Gastrocnemius medialis (tissue), 4 donors: ENCODE measurements at regions of chr14 and their contacts with region 1.

Region 1: GRCh38 chr14:23301288-23301968 is 1.2 kb downstream of the PPP1R3E start:
- DNase-seq: peak; percentile 97 to 98
- ATAC-seq: peak; percentile 73 to 78
- H3K4me3 ChIP-seq: peak overlapping the region; percentile 72 to 87 (median 82)
- H3K27ac ChIP-seq: peak overlapping the region; percentile 96 to 99 (median 98)
- H3K4me1 ChIP-seq: peaks cover 30 to 32% of the 10 kb centered on the region in 2 donors
- H3K27me3 ChIP-seq: no peaks in the 10 kb centered on the region
- CTCF ChIP-seq: peak; percentile 60 to 94 (median 79)
- POLR2A ChIP-seq: peak; percentile 84 to 88

Region 2: GRCh38 chr14:22589096-22589839 is 712.2 kb before region 1 on chr14 and contains the start of gene DAD1:
- in situ Hi-C with region 1: loop called in 3 of 4 experiments (anchors 25 kb)
- intact Hi-C with region 1: loop called (anchors 10 kb)
- DNase-seq: peak; percentile 97 to 98
- ATAC-seq: peak; percentile 100
- H3K4me3 ChIP-seq: peak within 1 kb of the TSS; percentile 70 to 95 (median 83)
- H3K27ac ChIP-seq: peak within 1 kb of the TSS; percentile 82 to 92 (median 87)
- H3K4me1 ChIP-seq: peaks cover 27 to 35% of the 10 kb centered on the region in 2 donors
- H3K27me3 ChIP-seq: no peaks in the 10 kb centered on the region
- CTCF ChIP-seq: peak in 1 of 5 experiments; percentile 27
- POLR2A ChIP-seq: peak; percentile 78 to 84
- total RNA-seq, gene DAD1: 155 to 257 (median 209) TPM

Region 3: DNA sequence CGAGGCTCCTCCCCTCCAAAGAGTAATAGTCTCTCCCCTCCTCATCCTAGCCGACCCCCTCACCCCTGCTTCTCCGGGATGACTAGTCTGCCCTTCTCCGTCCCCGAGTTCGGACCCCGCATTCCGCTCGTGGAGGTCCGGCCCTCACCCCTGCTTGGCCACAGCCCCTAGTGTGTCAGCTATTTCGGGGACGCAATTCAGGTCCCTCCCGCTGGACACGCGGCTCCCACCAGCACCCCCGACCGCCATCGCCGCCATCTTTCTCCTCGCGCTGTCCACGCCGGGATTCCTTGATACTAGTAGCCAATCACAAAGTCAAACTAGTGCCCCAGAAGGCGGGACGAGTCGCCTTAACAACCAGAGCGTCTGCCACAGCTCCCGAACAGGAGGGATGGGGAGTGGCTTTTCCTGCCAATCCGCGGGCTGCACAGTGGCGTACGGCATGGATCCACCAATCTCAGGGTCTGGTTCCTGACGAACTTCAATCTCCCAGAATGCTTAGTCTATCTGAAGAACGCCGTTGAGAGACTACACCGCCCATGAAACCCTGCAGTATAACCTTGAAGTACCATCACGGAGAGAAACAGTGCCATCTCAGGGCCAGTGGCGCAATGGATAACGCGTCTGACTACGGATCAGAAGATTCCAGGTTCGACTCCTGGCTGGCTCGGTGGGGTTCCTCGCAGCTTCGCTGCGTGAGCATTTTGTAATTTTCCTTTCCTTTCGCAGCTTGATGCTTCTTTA is 372.2 kb before region 1 on chr14 and contains the start of gene PRMT5:
- in situ Hi-C with region 1: no loop called
- intact Hi-C with region 1: loop called (anchors 5 kb)
- DNase-seq: peak; percentile 100
- ATAC-seq: peak; percentile 98 to 99
- H3K4me3 ChIP-seq: peak within 1 kb of the TSS; percentile 78 to 95 (median 86)
- H3K27ac ChIP-seq: peak within 1 kb of the TSS; percentile 89 to 96 (median 94)
- H3K4me1 ChIP-seq: peaks cover 9 to 11% of the 10 kb centered on the region in 2 donors
- H3K27me3 ChIP-seq: no peaks in the 10 kb centered on the region
- CTCF ChIP-seq: no peak
- POLR2A ChIP-seq: peak; percentile 84 to 92
- total RNA-seq, gene PRMT5: 67.2 to 83.2 (median 78.6) TPM

Region 4: DNA sequence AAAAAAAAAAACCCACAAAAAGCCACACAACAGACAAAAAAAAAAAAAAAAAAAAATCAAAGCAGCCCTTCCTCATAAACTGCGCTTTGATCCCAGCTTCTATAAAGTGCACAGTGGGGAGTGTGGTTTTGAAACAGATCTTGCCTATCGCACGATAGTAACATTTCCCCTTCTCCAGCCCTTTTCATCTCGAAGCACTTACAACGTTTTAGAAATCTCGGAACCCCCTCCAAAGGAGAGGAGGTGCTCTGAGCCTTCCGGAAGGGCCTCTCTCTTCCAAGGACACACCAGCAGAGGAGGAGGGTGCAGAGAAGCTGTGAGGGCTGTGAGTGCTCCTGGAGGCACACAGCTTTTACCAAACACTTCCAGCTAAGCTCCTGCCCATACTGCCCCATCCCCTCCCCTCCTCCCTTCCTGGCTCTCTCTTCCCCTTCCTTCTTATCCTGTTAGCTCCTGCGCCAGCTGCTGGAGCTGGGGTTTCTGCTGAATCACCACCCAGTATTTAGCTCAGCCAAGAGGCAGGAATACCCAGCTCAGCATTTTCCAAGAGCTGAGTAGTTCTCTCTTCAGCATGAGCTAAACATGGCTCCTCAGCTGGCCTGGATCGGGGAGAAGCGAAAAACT is 146.4 kb before region 1 on chr14:
- in situ Hi-C with region 1: no loop called
- intact Hi-C with region 1: loop called (anchors 2 kb)
- DNase-seq: peak; percentile 93 to 98
- ATAC-seq: peak; percentile 72 to 75
- H3K4me3 ChIP-seq: peak overlapping the region; percentile 30 to 55 (median 46)
- H3K27ac ChIP-seq: peak overlapping the region; percentile 90 to 97 (median 96)
- H3K4me1 ChIP-seq: peaks cover 45 to 60% of the 10 kb centered on the region in 2 donors
- H3K27me3 ChIP-seq: no peaks in the 10 kb centered on the region
- CTCF ChIP-seq: no peak
- POLR2A ChIP-seq: peak; percentile 70 to 79

Region 5: GRCh38 chr14:23286020-23286905 is 15.2 kb before region 1 on chr14 and contains the start of gene HOMEZ:
- in situ Hi-C with region 1: no loop called
- intact Hi-C with region 1: loop called (anchors 1 kb)
- DNase-seq: peak; percentile 100
- ATAC-seq: peak; percentile 93 to 95
- H3K4me3 ChIP-seq: peak within 1 kb of the TSS; percentile 84 to 99 (median 94)
- H3K27ac ChIP-seq: peak within 1 kb of the TSS; percentile 98 to 100 (median 100)
- H3K4me1 ChIP-seq: peaks cover 20 to 25% of the 10 kb centered on the region in 2 donors
- H3K27me3 ChIP-seq: no peaks in the 10 kb centered on the region
- CTCF ChIP-seq: peak in 3 of 5 experiments; percentile 11 to 23 (median 21)
- POLR2A ChIP-seq: peak; percentile 88 to 91
- total RNA-seq, gene HOMEZ: 7.8 to 10.0 (median 8.4) TPM

Region 6: GRCh38 chr14:24114536-24115450 is 813.4 kb after region 1 on chr14 and contains the starts of genes DCAF11 and NRL:
- in situ Hi-C with region 1: no loop called
- intact Hi-C with region 1: loop called (anchors 1 kb)
- DNase-seq: peak; percentile 99
- ATAC-seq: peak; percentile 87 to 89
- H3K4me3 ChIP-seq: peak within 1 kb of the TSS; percentile 74 to 93 (median 78)
- H3K27ac ChIP-seq: peak within 1 kb of the TSS; percentile 92 to 99 (median 98)
- H3K4me1 ChIP-seq: peaks cover 16 to 19% of the 10 kb centered on the region in 2 donors
- H3K27me3 ChIP-seq: no peaks in the 10 kb centered on the region
- CTCF ChIP-seq: peak in 1 of 5 experiments; percentile 32
- POLR2A ChIP-seq: peak in 1 of 2 donors; percentile 28
- total RNA-seq, gene DCAF11: 52.4 to 113 (median 88.7) TPM
- total RNA-seq, gene NRL: 0.82 to 4.5 (median 2.4) TPM

Region 7: GRCh38 chr14:24431569-24432258 is 1130.3 kb after region 1 on chr14:
- in situ Hi-C with region 1: loop called in 1 of 4 experiments (anchors 25 kb)
- intact Hi-C with region 1: no loop called
- DNase-seq: peak; percentile 76 to 87
- ATAC-seq: peak; percentile 51 to 70
- H3K4me3 ChIP-seq: peak overlapping the region in 3 of 4 donors; percentile 62 to 81 (median 76)
- H3K27ac ChIP-seq: peak overlapping the region; percentile 85 to 90 (median 86)
- H3K4me1 ChIP-seq: peaks cover 19 to 22% of the 10 kb centered on the region in 2 donors
- H3K27me3 ChIP-seq: no peaks in the 10 kb centered on the region
- CTCF ChIP-seq: peak; percentile 79 to 92 (median 88)
- POLR2A ChIP-seq: no peak